ENCODE measurements at regions of chr9 and their contacts with region 1.

Region 1: GRCh38 chr9:131610231-131610761 is 65.0 kb downstream of the PRRT1B start:
- DNase-seq: no peak
- ATAC-seq: no peak
- H3K4me3 ChIP-seq: no peak overlapping the region
- H3K4me3 Mint-ChIP-seq: no peak overlapping the region
- H3K27ac ChIP-seq: peak overlapping the region in 1 of 2 donors; percentile 14
- H3K27ac Mint-ChIP-seq: peak overlapping the region; percentile 59
- H3K4me1 ChIP-seq: no peaks in the 10 kb centered on the region
- H3K4me1 Mint-ChIP-seq: peaks cover 6% of the 10 kb centered on the region
- H3K27me3 ChIP-seq: no peaks in the 10 kb centered on the region
- H3K27me3 Mint-ChIP-seq: no peaks in the 10 kb centered on the region
- CTCF ChIP-seq: no peak

Region 2: DNA sequence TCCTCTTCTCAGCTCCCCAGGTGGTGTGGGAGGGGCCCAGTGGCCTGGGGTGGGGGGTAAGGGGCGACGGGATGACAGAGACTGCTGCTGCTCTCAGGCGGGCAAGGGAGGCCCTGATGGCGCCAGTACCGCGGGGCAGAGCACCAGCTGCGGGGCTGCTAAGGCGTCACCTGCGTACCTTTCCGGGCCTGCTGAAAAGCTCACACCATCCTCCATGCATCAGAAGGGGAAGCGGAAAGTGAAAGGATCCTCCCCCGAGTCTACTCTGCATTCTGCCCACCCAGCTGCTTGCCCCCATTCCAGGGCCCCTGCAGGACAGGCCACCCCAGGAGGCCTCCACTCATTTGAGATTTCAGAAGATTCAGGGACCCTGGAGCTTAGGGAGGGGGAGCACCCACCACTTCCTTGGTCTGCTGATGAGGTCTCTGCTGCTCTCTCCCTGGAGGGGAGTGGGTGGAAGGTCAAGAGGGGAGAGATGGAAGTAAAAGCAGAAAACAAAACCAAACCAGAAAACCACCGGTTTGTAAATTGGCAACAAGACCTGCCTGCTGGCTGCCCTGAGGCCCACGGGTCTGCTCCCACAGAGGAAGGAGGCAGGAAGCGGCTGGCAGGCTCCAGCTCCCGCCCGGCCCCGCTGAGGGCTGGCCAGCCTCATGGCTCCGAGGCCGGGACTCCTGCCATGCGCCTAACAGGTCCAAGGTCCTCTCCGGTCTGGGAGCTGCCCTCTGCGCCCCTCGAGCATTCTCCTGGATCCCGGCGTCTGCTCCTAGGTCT is 31.4 kb before region 1 on chr9:
- CTCF ChIA-PET with region 1: no interaction called
- POLR2A ChIA-PET with region 1: no interaction called
- intact Hi-C with region 1: loop called (anchors 1 kb)
- DNase-seq: peak; percentile 85
- ATAC-seq: peak; percentile 86
- H3K4me3 ChIP-seq: peak overlapping the region in 3 of 5 experiments; percentile 14 to 31 (median 23)
- H3K4me3 Mint-ChIP-seq: peak overlapping the region; percentile 77
- H3K27ac ChIP-seq: peak overlapping the region; percentile 67 to 83
- H3K27ac Mint-ChIP-seq: peak overlapping the region; percentile 94
- H3K4me1 ChIP-seq: peaks cover 19 to 27% of the 10 kb centered on the region in 2 donors
- H3K4me1 Mint-ChIP-seq: peaks cover 24% of the 10 kb centered on the region
- H3K27me3 ChIP-seq: no peaks in the 10 kb centered on the region
- H3K27me3 Mint-ChIP-seq: no peaks in the 10 kb centered on the region
- CTCF ChIP-seq: no peak

Region 3: GRCh38 chr9:131635892-131636291 is 25.6 kb after region 1 on chr9:
- CTCF ChIA-PET with region 1: no interaction called
- POLR2A ChIA-PET with region 1: no interaction called
- intact Hi-C with region 1: no loop called
- DNase-seq: no peak
- ATAC-seq: no peak
- H3K4me3 ChIP-seq: no peak overlapping the region
- H3K4me3 Mint-ChIP-seq: no peak overlapping the region
- H3K27ac ChIP-seq: peak overlapping the region in 1 of 2 donors; percentile 79
- H3K27ac Mint-ChIP-seq: peak overlapping the region; percentile 88
- H3K4me1 ChIP-seq: peaks cover 14 to 22% of the 10 kb centered on the region in 2 donors
- H3K4me1 Mint-ChIP-seq: peaks cover 41% of the 10 kb centered on the region
- H3K27me3 ChIP-seq: no peaks in the 10 kb centered on the region
- H3K27me3 Mint-ChIP-seq: no peaks in the 10 kb centered on the region
- CTCF ChIP-seq: no peak